Activated naive CD4-positive, alpha-beta T cell treated with anti-CD3 and anti-CD28 coated beads, Interleukin-2, amount 10 ng/mL, durations not matched to agents 7 days and 5 days (primary cell): ENCODE measurements at regions of chr6 and their contacts with region 1.

Region 1: DNA sequence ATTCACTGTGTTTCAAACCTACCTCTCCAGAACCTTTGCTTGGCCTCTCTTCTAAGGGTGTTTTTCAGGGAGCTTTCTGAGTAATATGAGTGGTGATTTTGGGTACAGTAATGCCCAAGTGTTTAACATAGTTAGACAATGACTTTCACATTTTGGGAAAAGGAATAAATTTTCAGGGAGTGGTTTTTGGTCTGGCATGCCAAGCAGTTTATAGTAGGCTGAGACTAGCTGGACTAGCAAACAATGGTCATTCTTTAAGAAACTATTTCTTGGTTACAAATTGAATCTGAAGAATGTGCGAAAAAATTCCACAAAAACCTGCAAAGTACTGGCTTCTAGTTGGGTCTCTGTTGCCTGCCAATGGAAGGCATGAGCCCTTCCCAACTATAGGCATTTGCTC is 15.4 kb downstream of the FNDC1 start:
- DNase-seq: no peak
- H3K4me3 Mint-ChIP-seq: no peak overlapping the region
- H3K27ac Mint-ChIP-seq: no peak overlapping the region
- H3K4me1 Mint-ChIP-seq: peaks cover 21% of the 10 kb centered on the region
- H3K27me3 Mint-ChIP-seq: peaks cover 11% of the 10 kb centered on the region

Region 2: GRCh38 chr6:159174263-159174969 is 10.1 kb before region 1 on chr6:
- CTCF ChIA-PET with region 1: interaction called, 27 read pairs
- DNase-seq: peak; percentile 79
- H3K4me3 Mint-ChIP-seq: no peak overlapping the region
- H3K27ac Mint-ChIP-seq: no peak overlapping the region
- H3K4me1 Mint-ChIP-seq: peaks cover 14% of the 10 kb centered on the region
- H3K27me3 Mint-ChIP-seq: peaks cover 57% of the 10 kb centered on the region